Naive thymus-derived CD4-positive, alpha-beta T cell (primary cell): ENCODE measurements at regions of chr6 and their contacts with region 1.

Region 1: GRCh38 chr6:6547110-6547879 is 41.2 kb upstream of the LY86 start:
- DNase-seq: peak; percentile 62 to 88 (median 77)
- ATAC-seq: peak; percentile 95
- H3K4me3 ChIP-seq: peak overlapping the region; percentile 59
- H3K4me3 Mint-ChIP-seq: peak overlapping the region; percentile 75 to 88 (median 81)
- H3K27ac ChIP-seq: no peak overlapping the region
- H3K27ac Mint-ChIP-seq: peak overlapping the region in 2 of 9 donors; percentile 17 to 33
- H3K4me1 ChIP-seq: peaks cover 0 to 13% of the 10 kb centered on the region in 2 donors
- H3K4me1 Mint-ChIP-seq: peaks cover 0 to 9% (median 4%) of the 10 kb centered on the region in 7 donors
- H3K27me3 ChIP-seq: peaks cover 0 to 16% of the 10 kb centered on the region in 2 donors
- H3K27me3 Mint-ChIP-seq: peaks cover 35 to 78% (median 50%) of the 10 kb centered on the region in 5 donors

Region 2: GRCh38 chr6:5143634-5144311 is 1403.5 kb before region 1 on chr6:
- CTCF ChIA-PET with region 1: interaction called, 26 read pairs
- POLR2A ChIA-PET with region 1: no interaction called
- intact Hi-C with region 1: loop called (anchors 1 kb)
- DNase-seq: peak; percentile 61 to 86 (median 73)
- ATAC-seq: peak; percentile 84
- H3K4me3 ChIP-seq: no peak overlapping the region
- H3K4me3 Mint-ChIP-seq: no peak overlapping the region
- H3K27ac ChIP-seq: no peak overlapping the region
- H3K27ac Mint-ChIP-seq: peak overlapping the region in 2 of 9 donors; percentile 18 to 25
- H3K4me1 ChIP-seq: no peaks in the 10 kb centered on the region
- H3K4me1 Mint-ChIP-seq: peaks cover 0 to 7% (median 5%) of the 10 kb centered on the region in 7 donors
- H3K27me3 ChIP-seq: no peaks in the 10 kb centered on the region
- H3K27me3 Mint-ChIP-seq: no peaks in the 10 kb centered on the region

Region 3: DNA sequence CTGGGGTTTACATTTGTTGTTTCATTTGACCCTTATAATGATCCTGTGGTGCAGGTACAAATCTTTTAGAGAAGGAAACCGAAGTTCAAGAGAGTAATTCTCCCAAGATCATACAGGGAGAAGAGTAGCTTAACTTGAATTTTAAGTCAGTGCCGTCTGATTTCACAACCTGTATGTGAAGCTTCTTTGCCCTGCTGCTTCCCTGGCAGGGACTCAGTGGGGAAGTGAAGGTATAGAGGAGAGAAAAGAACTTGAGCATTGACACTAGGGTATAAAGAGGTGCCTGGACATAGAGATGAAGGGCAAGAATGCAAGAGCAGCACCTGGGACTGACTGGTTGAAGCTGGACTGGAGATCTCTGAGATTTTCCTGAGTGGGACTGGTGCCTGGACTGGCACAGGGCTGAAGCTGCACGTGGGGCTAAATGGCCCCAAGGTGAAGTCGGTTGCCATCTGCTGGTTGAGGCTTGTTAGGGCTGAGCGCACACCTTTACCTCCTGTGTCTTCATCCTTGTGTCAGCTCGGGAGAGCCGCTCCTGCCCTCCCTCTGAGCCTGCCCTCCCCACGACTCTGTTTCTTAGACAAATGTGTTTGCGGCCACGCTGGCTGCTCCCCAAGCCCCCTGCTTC is 1244.2 kb before region 1 on chr6:
- CTCF ChIA-PET with region 1: interaction called, 5 read pairs
- POLR2A ChIA-PET with region 1: no interaction called
- intact Hi-C with region 1: loop called in 1 of 2 experiments (anchors 1 kb)
- DNase-seq: peak; percentile 8 to 53 (median 36)
- ATAC-seq: peak; percentile 90
- H3K4me3 ChIP-seq: peak overlapping the region; percentile 10
- H3K4me3 Mint-ChIP-seq: peak overlapping the region in 5 of 10 donors; percentile 3 to 36 (median 22)
- H3K27ac ChIP-seq: no peak overlapping the region
- H3K27ac Mint-ChIP-seq: peak overlapping the region in 5 of 9 donors; percentile 3 to 48 (median 15)
- H3K4me1 ChIP-seq: peaks cover 5 to 13% of the 10 kb centered on the region in 2 donors
- H3K4me1 Mint-ChIP-seq: peaks cover 20 to 58% (median 42%) of the 10 kb centered on the region in 7 donors
- H3K27me3 ChIP-seq: no peaks in the 10 kb centered on the region
- H3K27me3 Mint-ChIP-seq: no peaks in the 10 kb centered on the region

Region 4: DNA sequence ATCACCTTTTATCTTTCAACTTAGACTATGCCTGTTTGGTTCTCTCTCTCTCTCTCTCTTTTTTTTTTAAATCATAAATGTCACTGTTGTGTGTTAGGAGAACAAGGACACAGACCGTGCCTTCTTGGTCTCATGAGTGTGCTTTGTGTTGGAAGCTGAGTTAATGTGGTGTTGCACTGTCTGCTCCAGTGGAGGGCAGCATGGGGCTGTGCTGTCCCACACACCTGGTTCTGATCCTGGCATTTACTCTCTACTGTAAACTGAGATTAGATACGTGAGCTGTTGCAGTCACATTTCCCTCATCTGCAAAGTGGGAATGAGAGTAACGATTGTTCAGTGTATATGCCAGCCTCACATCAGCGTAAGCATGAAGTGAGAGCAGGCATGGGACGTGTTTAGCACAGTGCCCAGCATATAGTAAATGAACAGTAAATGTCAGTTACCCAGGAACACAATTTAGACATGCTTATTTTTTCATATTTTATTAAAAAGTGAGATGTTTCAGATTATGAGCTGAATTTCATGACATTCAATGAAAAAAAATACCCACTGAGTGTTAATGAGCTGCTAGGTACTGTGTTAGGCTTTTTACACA is 1124.9 kb before region 1 on chr6:
- CTCF ChIA-PET with region 1: interaction called, 6 read pairs
- POLR2A ChIA-PET with region 1: no interaction called
- intact Hi-C with region 1: loop called in 1 of 2 experiments (anchors 1 kb)
- DNase-seq: peak in 4 of 9 donors; percentile 3 to 30 (median 4)
- ATAC-seq: no peak
- H3K4me3 ChIP-seq: no peak overlapping the region
- H3K4me3 Mint-ChIP-seq: no peak overlapping the region
- H3K27ac ChIP-seq: no peak overlapping the region
- H3K27ac Mint-ChIP-seq: no peak overlapping the region
- H3K4me1 ChIP-seq: no peaks in the 10 kb centered on the region
- H3K4me1 Mint-ChIP-seq: peaks cover 0 to 47% (median 24%) of the 10 kb centered on the region in 7 donors
- H3K27me3 ChIP-seq: no peaks in the 10 kb centered on the region
- H3K27me3 Mint-ChIP-seq: no peaks in the 10 kb centered on the region

Region 5: DNA sequence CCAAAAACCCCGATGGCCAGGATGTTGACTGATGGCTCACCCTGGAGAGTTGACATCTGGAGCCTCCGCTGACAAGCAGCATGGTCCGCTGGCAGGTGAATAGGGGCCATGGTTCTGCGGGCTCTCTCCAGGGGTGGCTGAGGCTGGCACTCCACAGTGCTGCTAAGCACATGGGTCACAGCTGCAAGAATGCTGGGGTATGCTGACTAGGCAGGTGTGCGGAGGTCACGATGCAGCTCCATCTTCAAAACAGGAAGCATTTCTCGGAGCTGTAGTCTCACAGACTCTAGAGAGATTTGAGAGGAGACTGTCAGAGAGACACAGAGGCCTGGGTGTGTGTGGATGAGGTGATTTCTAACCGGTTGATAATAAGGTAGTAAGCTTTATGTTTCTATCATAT is 882.1 kb before region 1 on chr6:
- CTCF ChIA-PET with region 1: no interaction called
- POLR2A ChIA-PET with region 1: no interaction called
- intact Hi-C with region 1: loop called in 1 of 2 experiments (anchors 5 kb)
- DNase-seq: peak in 7 of 9 donors; percentile 25 to 75 (median 60)
- ATAC-seq: peak; percentile 84
- H3K4me3 ChIP-seq: peak overlapping the region; percentile 4
- H3K4me3 Mint-ChIP-seq: peak overlapping the region; percentile 41 to 81 (median 74)
- H3K27ac ChIP-seq: peak overlapping the region; percentile 45
- H3K27ac Mint-ChIP-seq: peak overlapping the region; percentile 75 to 98 (median 90)
- H3K4me1 ChIP-seq: peaks cover 0 to 56% of the 10 kb centered on the region in 2 donors
- H3K4me1 Mint-ChIP-seq: peaks cover 24 to 90% (median 84%) of the 10 kb centered on the region in 7 donors
- H3K27me3 ChIP-seq: no peaks in the 10 kb centered on the region
- H3K27me3 Mint-ChIP-seq: no peaks in the 10 kb centered on the region

Region 6: DNA sequence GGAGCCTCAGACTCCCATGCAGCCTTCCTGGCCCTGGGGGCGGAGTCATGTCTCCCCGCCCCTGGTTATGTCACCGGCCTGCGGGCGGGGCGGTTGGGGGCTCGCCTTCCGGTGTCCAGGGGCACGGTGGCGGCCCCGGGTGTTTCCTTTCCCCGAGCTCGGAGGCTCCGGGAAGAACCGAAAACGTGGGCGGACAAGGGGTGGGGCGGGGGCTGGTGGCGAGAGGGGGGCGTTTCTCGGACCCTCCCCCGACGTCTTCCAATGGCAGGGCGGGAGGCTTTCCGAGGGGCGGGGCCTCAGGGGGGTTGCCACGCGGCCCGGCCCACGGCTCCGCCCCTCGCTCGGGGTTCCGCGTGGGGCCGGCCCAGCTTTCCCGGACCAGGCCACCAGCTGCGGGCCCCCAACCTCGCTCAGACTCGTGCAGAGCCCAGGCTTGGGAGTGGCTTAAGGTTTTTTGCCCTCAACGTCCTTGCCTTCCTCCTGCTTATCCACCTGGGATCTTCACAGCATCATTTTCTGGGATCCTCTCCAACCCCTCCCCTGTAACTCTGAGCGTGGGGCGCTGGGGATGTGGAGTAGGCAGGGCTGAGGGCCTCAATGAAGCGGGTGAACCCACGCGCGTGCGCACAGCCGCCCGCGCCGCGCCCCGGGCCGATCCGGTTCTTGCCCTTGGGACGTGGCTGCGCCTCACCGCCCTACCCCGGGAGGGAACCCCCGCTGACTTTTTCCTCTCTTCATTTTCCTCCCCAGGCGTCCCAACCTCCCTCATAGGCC is 538.5 kb before region 1 on chr6:
- CTCF ChIA-PET with region 1: no interaction called
- POLR2A ChIA-PET with region 1: no interaction called
- intact Hi-C with region 1: loop called in 1 of 2 experiments (anchors 10 kb)
- DNase-seq: peak in 3 of 9 donors; percentile 18 to 71 (median 23)
- ATAC-seq: peak; percentile 66
- H3K4me3 ChIP-seq: peak overlapping the region; percentile 36
- H3K4me3 Mint-ChIP-seq: peak overlapping the region; percentile 32 to 87 (median 80)
- H3K27ac ChIP-seq: no peak overlapping the region
- H3K27ac Mint-ChIP-seq: no peak overlapping the region
- H3K4me1 ChIP-seq: peaks cover 20 to 36% of the 10 kb centered on the region in 2 donors
- H3K4me1 Mint-ChIP-seq: peaks cover 27 to 52% (median 44%) of the 10 kb centered on the region in 7 donors
- H3K27me3 ChIP-seq: peaks cover 43 to 45% of the 10 kb centered on the region in 2 donors
- H3K27me3 Mint-ChIP-seq: peaks cover 68 to 82% (median 70%) of the 10 kb centered on the region in 5 donors

Region 7: DNA sequence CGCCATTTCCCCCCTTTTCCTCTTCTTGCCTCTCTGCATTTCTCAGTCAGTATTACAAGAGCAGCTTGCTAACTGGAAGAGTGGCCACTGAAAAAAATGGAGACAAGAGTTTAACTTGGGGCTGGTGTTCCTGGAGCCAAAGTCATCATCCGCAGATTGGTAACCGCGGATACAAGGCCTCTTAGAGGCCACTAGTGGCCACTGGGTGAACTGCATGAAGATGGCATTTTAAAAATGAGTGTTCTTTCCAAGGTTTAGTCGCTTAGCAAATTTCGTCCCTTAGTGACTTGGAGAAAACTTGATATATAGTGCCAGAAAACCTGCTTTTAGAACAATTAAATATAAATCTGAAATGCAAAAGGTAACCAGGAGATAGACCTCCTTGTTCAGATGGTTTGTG is 231.6 kb before region 1 on chr6:
- CTCF ChIA-PET with region 1: no interaction called
- POLR2A ChIA-PET with region 1: no interaction called
- intact Hi-C with region 1: loop called in 1 of 2 experiments (anchors 1 kb)
- DNase-seq: peak in 4 of 9 donors; percentile 11 to 27 (median 20)
- ATAC-seq: peak; percentile 57
- H3K4me3 ChIP-seq: no peak overlapping the region
- H3K4me3 Mint-ChIP-seq: no peak overlapping the region
- H3K27ac ChIP-seq: no peak overlapping the region
- H3K27ac Mint-ChIP-seq: peak overlapping the region in 1 of 9 donors; percentile 47
- H3K4me1 ChIP-seq: no peaks in the 10 kb centered on the region
- H3K4me1 Mint-ChIP-seq: peaks cover 0 to 5% (median 0%) of the 10 kb centered on the region in 7 donors
- H3K27me3 ChIP-seq: no peaks in the 10 kb centered on the region
- H3K27me3 Mint-ChIP-seq: peaks cover 34 to 52% (median 51%) of the 10 kb centered on the region in 5 donors